ENCODE measurements at regions of chr5 and their contacts with region 1.

Region 1: GRCh38 chr5:168947212-168947868 is 353.6 kb downstream of the SLIT3 start:
- DNase-seq: peak; percentile 78
- H3K4me3 ChIP-seq: peak overlapping the region in 1 of 2 experiments; percentile 44; a peak in 1 of 4 replicates
- H3K27ac ChIP-seq: peak overlapping the region in 1 of 2 experiments; percentile 98; a peak in 2 of 4 replicates
- H3K4me1 ChIP-seq: peaks cover 0 to 69% of the 10 kb centered on the region in 2 experiments; a peak in 2 of 4 replicates
- H3K27me3 ChIP-seq: no peaks in the 10 kb centered on the region
- CTCF ChIP-seq: peak; percentile 87
- EP300 ChIP-seq: 0 out of 4 replicates have a peak, but pooled peaks of 1 of the 2 experiments have one; percentile 32
- RAD21 ChIP-seq: peak; percentile 88

Region 2: GRCh38 chr5:168328814-168329213 is 618.5 kb before region 1 on chr5:
- CTCF ChIA-PET with region 1: no interaction called
- POLR2A ChIA-PET with region 1: no interaction called
- DNase-seq: no peak
- H3K4me3 ChIP-seq: no peak overlapping the region
- H3K27ac ChIP-seq: no peak overlapping the region
- H3K4me1 ChIP-seq: peaks cover 5 to 7% of the 10 kb centered on the region in 2 experiments; a peak in 2 of 4 replicates
- H3K27me3 ChIP-seq: no peaks in the 10 kb centered on the region
- CTCF ChIP-seq: no peak
- EP300 ChIP-seq: no peak
- RAD21 ChIP-seq: no peak

Region 3: GRCh38 chr5:168706655-168707069 is 240.7 kb before region 1 on chr5:
- CTCF ChIA-PET with region 1: interaction called, 10 read pairs
- POLR2A ChIA-PET with region 1: no interaction called
- DNase-seq: peak; percentile 43
- H3K4me3 ChIP-seq: no peak overlapping the region
- H3K27ac ChIP-seq: peak overlapping the region in 1 of 2 experiments; percentile 61; a peak in 2 of 4 replicates
- H3K4me1 ChIP-seq: peaks cover 0 to 20% of the 10 kb centered on the region in 2 experiments; a peak in 3 of 4 replicates
- H3K27me3 ChIP-seq: no peaks in the 10 kb centered on the region
- CTCF ChIP-seq: peak; percentile 67
- EP300 ChIP-seq: no peak
- RAD21 ChIP-seq: peak; percentile 65

Region 4: GRCh38 chr5:168836603-168837231 is 110.6 kb before region 1 on chr5:
- CTCF ChIA-PET with region 1: interaction called, 10 read pairs
- POLR2A ChIA-PET with region 1: interaction called, 4 read pairs
- DNase-seq: no peak
- H3K4me3 ChIP-seq: peak overlapping the region in 1 of 2 experiments; percentile 25; a peak in 1 of 4 replicates
- H3K27ac ChIP-seq: peak overlapping the region in 1 of 2 experiments; percentile 96; a peak in 2 of 4 replicates
- H3K4me1 ChIP-seq: peaks cover 0 to 60% of the 10 kb centered on the region in 2 experiments; a peak in 2 of 4 replicates
- H3K27me3 ChIP-seq: no peaks in the 10 kb centered on the region
- CTCF ChIP-seq: no peak
- EP300 ChIP-seq: no peak
- RAD21 ChIP-seq: no peak

Region 5: GRCh38 chr5:168925160-168925559 is 22.2 kb before region 1 on chr5:
- CTCF ChIA-PET with region 1: interaction called, 13 read pairs
- POLR2A ChIA-PET with region 1: no interaction called
- DNase-seq: no peak
- H3K4me3 ChIP-seq: no peak overlapping the region
- H3K27ac ChIP-seq: no peak overlapping the region
- H3K4me1 ChIP-seq: peaks cover 0 to 21% of the 10 kb centered on the region in 2 experiments; a peak in 2 of 4 replicates
- H3K27me3 ChIP-seq: no peaks in the 10 kb centered on the region
- CTCF ChIP-seq: no peak
- EP300 ChIP-seq: no peak
- RAD21 ChIP-seq: no peak

Region 6: GRCh38 chr5:168978015-168978414 is 30.7 kb after region 1 on chr5:
- CTCF ChIA-PET with region 1: interaction called, 14 read pairs
- POLR2A ChIA-PET with region 1: no interaction called
- DNase-seq: no peak
- H3K4me3 ChIP-seq: no peak overlapping the region
- H3K27ac ChIP-seq: peak overlapping the region; percentile 67 to 94
- H3K4me1 ChIP-seq: peaks cover 20 to 58% of the 10 kb centered on the region in 2 experiments; a peak in 3 of 4 replicates
- H3K27me3 ChIP-seq: no peaks in the 10 kb centered on the region
- CTCF ChIP-seq: no peak
- EP300 ChIP-seq: no peak
- RAD21 ChIP-seq: no peak

Region 7: GRCh38 chr5:169067751-169068173 is 120.4 kb after region 1 on chr5:
- CTCF ChIA-PET with region 1: no interaction called
- POLR2A ChIA-PET with region 1: no interaction called
- DNase-seq: no peak
- H3K4me3 ChIP-seq: no peak overlapping the region
- H3K27ac ChIP-seq: 0 out of 4 replicates have a peak overlapping the region, but pooled peaks of 1 of the 2 experiments have one; percentile 1
- H3K4me1 ChIP-seq: peaks cover 4 to 23% of the 10 kb centered on the region in 2 experiments; a peak in 3 of 4 replicates
- H3K27me3 ChIP-seq: no peaks in the 10 kb centered on the region
- CTCF ChIP-seq: no peak
- EP300 ChIP-seq: no peak
- RAD21 ChIP-seq: no peak

Region 8: GRCh38 chr5:169302491-169303118 is 355.3 kb after region 1 on chr5:
- CTCF ChIA-PET with region 1: interaction called, 25 read pairs
- POLR2A ChIA-PET with region 1: no interaction called
- DNase-seq: peak; percentile 69
- H3K4me3 ChIP-seq: peak overlapping the region in 1 of 2 experiments; percentile 18; a peak in 1 of 4 replicates
- H3K27ac ChIP-seq: peak overlapping the region; percentile 46 to 80; a peak in 2 of 4 replicates
- H3K4me1 ChIP-seq: peaks cover 10 to 31% of the 10 kb centered on the region in 2 experiments; a peak in 2 of 4 replicates
- H3K27me3 ChIP-seq: no peaks in the 10 kb centered on the region
- CTCF ChIP-seq: peak; percentile 96
- EP300 ChIP-seq: no peak
- RAD21 ChIP-seq: peak; percentile 91